HepG2 (cell line): ENCODE measurements at regions of chr1 and their contacts with region 1.

Region 1: GRCh38 chr1:107965573-107965991 is 602 bp upstream of the VAV3 start:
- DNase-seq: peak; percentile 50
- ATAC-seq: peak; percentile 87
- H3K4me3 ChIP-seq: peak overlapping the region; percentile 53 to 72 (median 57); a peak in 5 of 6 replicates
- H3K27ac ChIP-seq: no peak overlapping the region
- H3K4me1 ChIP-seq: peaks cover 18% of the 10 kb centered on the region; the same call in 1 of the 2 replicates
- H3K27me3 ChIP-seq: peaks cover 6 to 26% of the 10 kb centered on the region in 2 experiments
- CTCF ChIP-seq: no peak
- EP300 ChIP-seq: no peak
- POLR2A ChIP-seq: no peak
- RAD21 ChIP-seq: no peak

Region 2: GRCh38 chr1:107991371-107992066 is 25.9 kb after region 1 on chr1:
- CTCF ChIA-PET with region 1: no interaction called
- POLR2A ChIA-PET with region 1: no interaction called
- in situ Hi-C with region 1: no loop called
- intact Hi-C with region 1: no loop called
- DNase-seq: no peak
- ATAC-seq: no peak
- H3K4me3 ChIP-seq: no peak overlapping the region
- H3K27ac ChIP-seq: no peak overlapping the region
- H3K4me1 ChIP-seq: peaks cover 6% of the 10 kb centered on the region; the same call in 1 of the 2 replicates
- H3K27me3 ChIP-seq: no peaks in the 10 kb centered on the region
- CTCF ChIP-seq: no peak
- EP300 ChIP-seq: no peak
- POLR2A ChIP-seq: no peak
- RAD21 ChIP-seq: no peak

Region 3: GRCh38 chr1:108125312-108126138 is 159.9 kb after region 1 on chr1:
- CTCF ChIA-PET with region 1: no interaction called
- POLR2A ChIA-PET with region 1: no interaction called
- in situ Hi-C with region 1: no loop called
- intact Hi-C with region 1: loop called (anchors 1 kb)
- DNase-seq: peak; percentile 61
- ATAC-seq: peak; percentile 93
- H3K4me3 ChIP-seq: no peak overlapping the region
- H3K27ac ChIP-seq: no peak overlapping the region
- H3K4me1 ChIP-seq: no peaks in the 10 kb centered on the region
- H3K27me3 ChIP-seq: peaks cover 0 to 2% of the 10 kb centered on the region in 2 experiments; a peak in 1 of 5 replicates
- CTCF ChIP-seq: peak; percentile 93
- EP300 ChIP-seq: no peak
- POLR2A ChIP-seq: no peak
- RAD21 ChIP-seq: peak; percentile 89